Mammary epithelial cell (primary cell): ENCODE measurements at regions of chr3 and their contacts with region 1.

Region 1: DNA sequence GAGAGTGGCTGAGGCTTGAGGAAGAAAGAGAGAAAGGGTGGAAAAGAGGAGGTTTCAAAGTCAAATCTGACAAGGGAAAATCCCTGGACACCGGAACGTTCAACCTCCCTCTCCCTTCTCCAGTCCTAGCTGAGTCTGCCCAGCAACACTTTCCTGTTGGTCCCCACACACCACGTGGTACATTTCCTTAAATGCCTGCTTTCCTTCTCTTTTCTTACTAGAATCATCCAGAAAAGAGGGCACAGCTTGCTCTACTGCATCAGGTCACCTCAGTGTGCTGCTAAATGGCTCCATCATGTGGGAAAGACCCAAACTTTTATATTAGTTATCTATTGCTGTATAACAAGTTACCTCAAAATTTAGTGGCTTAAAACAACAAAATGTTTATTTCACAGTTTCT is 181.2 kb downstream of the NECTIN3 start:
- DNase-seq: no peak
- H3K4me3 ChIP-seq: no peak overlapping the region
- H3K27ac ChIP-seq: no peak overlapping the region
- H3K4me1 ChIP-seq: peaks cover 10% of the 10 kb centered on the region
- H3K27me3 ChIP-seq: no peaks in the 10 kb centered on the region
- CTCF ChIP-seq: no peak

Region 2: GRCh38 chr3:110027446-110028076 is 1225.2 kb before region 1 on chr3:
- CTCF ChIA-PET with region 1: no interaction called
- dilution Hi-C with region 1: no loop called
- in situ Hi-C with region 1: no loop called
- intact Hi-C with region 1: no loop called
- DNase-seq: peak; percentile 68
- H3K4me3 ChIP-seq: no peak overlapping the region
- H3K27ac ChIP-seq: no peak overlapping the region
- H3K4me1 ChIP-seq: peaks cover 8% of the 10 kb centered on the region
- H3K27me3 ChIP-seq: no peaks in the 10 kb centered on the region
- CTCF ChIP-seq: no peak

Region 3: GRCh38 chr3:111210003-111210711 is 42.6 kb before region 1 on chr3:
- CTCF ChIA-PET with region 1: no interaction called
- dilution Hi-C with region 1: no loop called
- in situ Hi-C with region 1: no loop called
- intact Hi-C with region 1: loop called (anchors 5 kb)
- DNase-seq: peak; percentile 28
- H3K4me3 ChIP-seq: no peak overlapping the region
- H3K27ac ChIP-seq: no peak overlapping the region
- H3K4me1 ChIP-seq: no peaks in the 10 kb centered on the region
- H3K27me3 ChIP-seq: no peaks in the 10 kb centered on the region
- CTCF ChIP-seq: peak in 1 of 2 donors; percentile 31